OCI-LY7 (cell line): ENCODE measurements at regions of chr11 and their contacts with region 1.

Region 1: GRCh38 chr11:76919887-76920746 is 59.4 kb downstream of the ACER3 start:
- DNase-seq: peak; percentile 85
- H3K4me3 ChIP-seq: no peak overlapping the region
- H3K27ac ChIP-seq: no peak overlapping the region
- H3K4me1 ChIP-seq: no peaks in the 10 kb centered on the region
- CTCF ChIP-seq: peak; percentile 98

Region 2: DNA sequence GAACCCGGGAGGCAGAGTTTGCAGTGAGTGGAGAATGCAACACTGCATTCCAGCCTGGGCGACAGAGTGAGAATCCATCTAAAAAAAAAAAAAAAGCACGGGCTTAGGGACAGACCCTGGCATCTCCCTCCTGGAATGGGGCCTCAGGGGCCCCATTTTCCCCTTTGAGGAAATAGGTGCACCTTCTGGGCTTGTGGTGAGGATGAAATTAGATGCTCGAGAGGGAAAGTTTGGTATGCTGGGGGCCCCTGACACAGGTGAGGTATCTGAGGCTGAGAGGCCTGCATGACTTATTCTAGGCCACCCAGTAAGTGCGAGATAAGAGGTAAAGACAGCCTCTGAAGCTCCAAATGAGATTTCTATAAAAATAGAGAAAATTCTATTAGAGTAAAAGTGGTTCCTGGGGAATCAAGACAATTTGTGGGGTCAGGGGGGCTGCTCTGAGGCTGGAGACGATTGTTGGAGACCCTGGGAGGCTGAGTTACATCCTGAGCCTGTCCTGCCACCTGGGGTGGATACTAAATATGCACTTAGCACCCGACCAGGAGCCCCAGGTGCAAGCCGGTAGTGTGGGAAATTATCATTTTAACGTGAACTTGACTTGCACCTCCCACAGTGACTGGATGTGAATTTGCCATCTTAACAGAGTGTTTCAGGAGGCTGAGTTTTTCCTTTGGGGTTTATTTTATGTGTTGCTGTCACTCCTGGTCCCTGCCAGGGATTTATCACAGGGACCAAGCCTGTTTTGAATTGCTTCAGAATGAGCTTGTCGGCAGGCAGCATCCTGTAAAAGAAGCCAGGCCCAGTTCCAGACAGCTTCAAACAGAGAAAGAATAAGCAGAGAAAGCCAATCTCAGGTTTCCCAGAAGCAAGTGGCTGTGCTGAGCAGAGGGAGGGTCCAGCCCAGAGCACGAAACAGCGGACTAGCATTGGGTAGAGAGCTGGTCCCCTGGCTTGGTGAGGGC is 185.4 kb before region 1 on chr11:
- CTCF ChIA-PET with region 1: no interaction called
- POLR2A ChIA-PET with region 1: interaction called, 5 read pairs
- intact Hi-C with region 1: loop called (anchors 2 kb)
- DNase-seq: no peak
- H3K4me3 ChIP-seq: no peak overlapping the region
- H3K27ac ChIP-seq: no peak overlapping the region
- H3K4me1 ChIP-seq: no peaks in the 10 kb centered on the region
- CTCF ChIP-seq: no peak

Region 3: DNA sequence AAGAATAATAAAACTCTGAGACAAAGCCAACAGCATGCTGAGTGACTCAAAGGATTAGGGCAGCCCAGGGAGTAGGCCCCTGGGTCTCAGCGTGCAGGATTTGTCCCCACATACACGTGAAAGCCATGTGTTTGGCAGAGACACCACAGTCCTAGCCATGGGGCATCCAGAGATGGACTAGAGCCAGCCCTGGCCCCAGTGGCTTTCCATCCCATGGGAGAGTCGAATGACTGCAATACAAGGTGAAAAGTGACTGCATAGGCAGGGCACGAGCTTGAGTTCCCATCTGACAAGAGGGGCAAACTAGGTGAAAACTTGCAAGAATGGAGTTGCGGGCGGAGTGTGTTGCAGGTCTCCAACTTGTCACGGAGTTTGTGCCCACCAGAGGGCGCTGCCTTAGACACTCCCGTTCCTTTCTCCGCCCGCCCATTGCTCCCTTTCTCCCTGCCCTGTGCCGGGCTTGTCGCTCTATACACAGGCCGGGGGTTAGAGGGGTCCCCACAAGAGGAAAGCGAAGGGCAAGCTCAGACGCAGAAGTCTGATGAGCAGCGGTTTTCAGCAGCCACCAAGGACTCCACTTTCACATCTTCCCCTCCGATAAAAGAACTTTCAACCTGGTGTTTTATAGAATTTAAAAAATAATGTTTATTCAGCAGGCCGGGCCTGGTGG is 112.8 kb before region 1 on chr11:
- CTCF ChIA-PET with region 1: interaction called, 13 read pairs
- POLR2A ChIA-PET with region 1: interaction called, 3 read pairs
- intact Hi-C with region 1: loop called (anchors 1 kb)
- DNase-seq: peak; percentile 69
- H3K4me3 ChIP-seq: no peak overlapping the region
- H3K27ac ChIP-seq: no peak overlapping the region
- H3K4me1 ChIP-seq: no peaks in the 10 kb centered on the region
- CTCF ChIP-seq: peak; percentile 87

Region 4: DNA sequence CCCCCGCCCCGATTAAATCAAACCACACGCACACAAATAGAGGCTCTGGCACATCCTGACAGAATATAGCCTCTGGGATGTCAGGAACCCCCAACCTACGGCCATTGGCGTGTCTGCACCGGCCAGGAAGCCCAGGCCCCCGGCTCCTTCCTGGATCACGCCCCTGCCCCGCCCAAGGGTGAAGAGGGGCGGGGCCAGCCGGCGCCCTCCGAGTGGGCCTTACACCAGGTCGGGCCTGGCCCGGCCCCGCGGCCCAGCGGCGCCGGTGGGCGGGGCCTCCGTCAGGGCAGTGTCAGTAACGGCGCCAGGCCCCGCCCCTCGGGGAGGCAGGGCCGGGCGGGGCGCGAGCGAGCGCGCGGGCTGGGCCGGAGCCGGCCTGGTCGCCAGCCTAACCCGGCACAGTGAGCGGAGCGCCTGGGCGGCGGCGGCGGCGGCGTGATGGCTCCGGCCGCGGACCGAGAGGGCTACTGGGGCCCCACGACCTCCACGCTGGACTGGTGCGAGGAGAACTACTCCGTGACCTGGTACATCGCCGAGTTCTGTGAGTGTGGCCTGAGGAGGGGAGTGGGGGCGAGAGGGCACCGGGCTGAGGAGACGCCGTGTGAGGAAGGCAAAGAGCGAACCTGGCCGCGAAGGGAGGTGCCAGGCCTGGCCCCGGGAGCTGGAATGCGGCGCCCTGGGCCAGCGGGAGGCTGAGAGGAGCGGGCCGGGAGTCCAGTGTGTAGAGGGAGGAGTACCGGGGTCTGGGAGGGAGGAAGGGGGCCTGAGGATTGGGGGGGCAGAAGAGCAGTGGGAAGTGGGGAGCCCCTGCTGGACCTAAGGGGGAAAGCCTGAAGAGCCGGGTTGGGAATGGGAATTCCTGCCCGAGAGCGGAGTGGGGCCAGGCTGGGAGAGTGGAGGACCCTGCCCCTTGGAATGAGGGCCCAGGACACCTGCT is 59.3 kb before region 1 on chr11 and contains the start of gene ACER3:
- CTCF ChIA-PET with region 1: no interaction called
- POLR2A ChIA-PET with region 1: no interaction called
- intact Hi-C with region 1: loop called (anchors 5 kb)
- DNase-seq: peak; percentile 97
- H3K4me3 ChIP-seq: peak within 1 kb of the TSS; percentile 72
- H3K27ac ChIP-seq: no peak within 1 kb of the TSS
- H3K4me1 ChIP-seq: peaks cover 14% of the 10 kb centered on the region
- CTCF ChIP-seq: no peak
- total RNA-seq, gene ACER3: 3.0 and 3.8 TPM in 2 replicates

Region 5: DNA sequence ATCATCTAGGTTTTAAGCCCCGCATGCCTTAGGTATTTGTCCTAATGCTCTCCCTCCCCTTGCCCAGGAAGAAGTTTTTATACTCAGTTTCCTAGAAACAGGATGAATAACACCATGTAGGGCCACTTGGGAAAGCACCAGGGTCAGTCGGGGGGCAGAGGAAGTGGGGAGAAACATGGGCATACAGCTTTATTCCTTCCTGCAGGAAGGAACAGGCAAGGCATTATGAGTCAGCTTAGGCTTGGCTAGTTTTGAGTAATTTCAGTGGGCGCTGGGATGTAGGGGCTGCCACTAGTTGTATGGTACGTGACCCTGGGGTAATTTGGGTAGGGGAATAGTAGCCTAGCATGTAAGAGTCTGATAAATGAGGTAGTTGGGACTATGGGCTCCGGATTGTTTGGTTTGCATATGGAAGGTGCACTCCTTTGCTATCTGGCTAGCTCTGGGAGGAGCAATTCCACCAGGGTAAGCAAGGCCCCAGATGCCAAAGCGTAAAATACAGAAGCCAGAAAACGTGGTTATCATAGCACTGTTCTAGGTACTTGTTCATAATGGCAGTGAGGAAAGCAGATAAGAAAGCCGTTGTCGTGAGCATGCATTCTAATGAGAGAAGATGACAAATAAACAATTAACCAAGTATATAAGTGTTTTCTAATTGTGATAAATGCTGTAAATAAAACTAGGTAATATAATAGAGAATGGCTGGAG is 34.6 kb before region 1 on chr11:
- CTCF ChIA-PET with region 1: no interaction called
- POLR2A ChIA-PET with region 1: no interaction called
- intact Hi-C with region 1: no loop called
- DNase-seq: no peak
- H3K4me3 ChIP-seq: no peak overlapping the region
- H3K27ac ChIP-seq: no peak overlapping the region
- H3K4me1 ChIP-seq: no peaks in the 10 kb centered on the region
- CTCF ChIP-seq: no peak

Region 6: DNA sequence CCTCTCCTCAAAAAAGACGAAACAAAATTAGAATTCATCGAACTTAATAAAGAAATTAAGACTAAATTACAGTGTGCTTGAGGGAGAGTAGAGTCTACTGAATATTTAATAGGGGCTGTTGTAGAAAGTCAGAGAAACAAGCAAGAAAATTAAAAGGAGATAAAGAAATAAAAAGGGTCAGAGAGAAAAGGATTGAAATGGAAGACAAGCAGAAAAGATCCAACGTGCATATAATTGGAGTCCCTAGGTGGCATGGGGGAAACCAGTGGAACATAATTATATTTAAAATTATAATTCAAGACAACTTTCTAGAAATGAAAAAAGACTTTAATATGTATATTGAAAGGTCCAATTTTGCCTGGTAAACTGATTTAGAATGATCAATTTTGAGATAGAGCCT is 14.9 kb after region 1 on chr11:
- CTCF ChIA-PET with region 1: no interaction called
- POLR2A ChIA-PET with region 1: no interaction called
- intact Hi-C with region 1: no loop called
- DNase-seq: peak; percentile 10
- H3K4me3 ChIP-seq: no peak overlapping the region
- H3K27ac ChIP-seq: no peak overlapping the region
- H3K4me1 ChIP-seq: no peaks in the 10 kb centered on the region
- CTCF ChIP-seq: no peak

Region 7: GRCh38 chr11:77039491-77040400 is 119.6 kb after region 1 on chr11:
- CTCF ChIA-PET with region 1: no interaction called
- POLR2A ChIA-PET with region 1: no interaction called
- intact Hi-C with region 1: loop called (anchors 5 kb)
- DNase-seq: no peak
- H3K4me3 ChIP-seq: no peak overlapping the region
- H3K27ac ChIP-seq: no peak overlapping the region
- H3K4me1 ChIP-seq: no peaks in the 10 kb centered on the region
- CTCF ChIP-seq: no peak